Upper lobe of right lung (tissue), 1 donor: ENCODE measurements at regions of chrX and their contacts with region 1.

Region 1: DNA sequence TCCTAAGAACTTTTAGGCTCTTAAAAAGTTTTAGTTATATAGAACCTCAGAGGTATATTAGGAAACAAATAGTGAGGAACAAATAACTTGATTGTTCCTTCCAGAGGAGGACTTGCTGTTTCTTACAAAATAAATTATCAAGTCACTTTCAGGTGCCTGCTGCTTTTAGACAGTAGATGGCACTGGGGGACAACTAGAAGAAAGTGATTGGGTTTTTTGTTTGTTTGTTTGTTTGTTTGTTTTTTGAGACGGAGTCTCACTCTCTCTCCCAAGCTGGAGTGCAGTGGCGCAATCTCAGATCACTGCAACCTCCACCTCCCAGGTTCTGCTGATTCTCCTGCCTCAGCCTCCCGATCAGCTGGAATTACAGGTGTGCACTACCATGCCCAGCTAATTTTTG is 35.4 kb upstream of the CDKL5 start:
- DNase-seq: no peak
- ATAC-seq: no peak
- H3K4me3 ChIP-seq: no peak overlapping the region
- H3K27ac ChIP-seq: no peak overlapping the region
- H3K4me1 ChIP-seq: no peaks in the 10 kb centered on the region
- H3K27me3 ChIP-seq: no peaks in the 10 kb centered on the region
- CTCF ChIP-seq: no peak

Region 2: DNA sequence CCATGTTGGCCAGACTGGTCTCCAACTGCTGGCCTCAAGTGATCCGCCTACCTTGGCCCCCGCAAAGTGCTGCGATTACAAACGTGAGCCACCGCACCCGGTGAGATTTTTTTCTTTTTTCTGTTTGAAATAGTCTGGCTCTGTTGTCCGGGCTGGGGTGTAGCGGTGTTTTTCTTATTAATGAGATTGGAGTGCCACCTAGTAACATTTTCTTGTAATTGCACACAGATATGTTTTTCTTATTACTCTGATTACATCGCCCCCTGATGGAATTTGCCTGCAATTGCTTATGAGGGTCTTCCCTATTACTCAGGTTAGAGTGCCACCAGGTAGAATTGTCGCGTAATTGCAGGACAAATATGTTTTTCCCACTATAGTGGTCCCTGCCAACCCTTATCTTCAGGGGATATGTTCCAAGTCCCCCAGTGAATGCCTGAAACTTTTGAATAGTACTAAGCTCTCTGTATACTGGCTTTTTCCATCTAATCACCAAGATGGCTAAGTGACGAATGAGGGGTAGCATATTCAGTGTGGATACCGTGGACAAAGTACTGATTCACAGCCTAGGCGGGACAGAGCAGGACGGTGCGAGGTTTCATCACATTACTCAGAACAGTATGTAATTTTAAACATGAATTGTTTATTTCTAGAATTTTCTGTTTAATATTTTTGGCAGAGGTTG is 945.1 kb after region 1 on chrX:
- intact Hi-C with region 1: loop called (anchors 10 kb)
- DNase-seq: no peak
- ATAC-seq: peak; percentile 33
- H3K4me3 ChIP-seq: no peak overlapping the region
- H3K27ac ChIP-seq: no peak overlapping the region
- H3K4me1 ChIP-seq: no peaks in the 10 kb centered on the region
- H3K27me3 ChIP-seq: no peaks in the 10 kb centered on the region
- CTCF ChIP-seq: peak; percentile 13